Activated CD4-positive, alpha-beta T cell treated with anti-CD3 and anti-CD28 coated beads for 36 hours (primary cell): ENCODE measurements at regions of chr4 and their contacts with region 1.

Region 1: GRCh38 chr4:92305148-92305877 is 1.5 kb downstream of the GRID2 start:
- DNase-seq: peak; percentile 16
- ATAC-seq: no peak
- H3K4me3 Mint-ChIP-seq: no peak overlapping the region
- H3K27ac Mint-ChIP-seq: no peak overlapping the region
- H3K4me1 Mint-ChIP-seq: peaks cover 4% of the 10 kb centered on the region
- H3K27me3 Mint-ChIP-seq: peaks cover 35% of the 10 kb centered on the region

Region 2: DNA sequence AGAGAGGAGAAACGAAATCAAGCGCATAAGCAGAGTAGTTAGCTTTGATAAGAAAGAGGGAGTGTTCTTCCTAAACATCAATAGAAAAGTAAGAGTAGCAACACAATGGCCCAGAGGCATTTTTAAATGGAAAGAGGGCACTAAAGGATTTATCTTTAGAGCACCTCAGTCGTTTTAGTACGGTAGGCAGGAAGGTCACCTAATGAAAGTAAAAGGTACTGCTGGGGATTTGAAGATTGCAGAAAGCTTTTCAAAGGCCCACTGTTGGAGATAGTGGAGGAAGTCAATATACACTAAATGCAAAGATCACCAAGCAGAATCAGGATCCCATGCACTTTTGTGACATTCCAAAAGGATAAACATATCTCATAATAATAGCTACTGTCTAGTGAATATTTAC is 669.2 kb before region 1 on chr4:
- CTCF ChIA-PET with region 1: no interaction called
- POLR2A ChIA-PET with region 1: no interaction called
- intact Hi-C with region 1: no loop called
- DNase-seq: no peak
- ATAC-seq: no peak
- H3K4me3 Mint-ChIP-seq: no peak overlapping the region
- H3K27ac Mint-ChIP-seq: no peak overlapping the region
- H3K4me1 Mint-ChIP-seq: no peaks in the 10 kb centered on the region
- H3K27me3 Mint-ChIP-seq: no peaks in the 10 kb centered on the region

Region 3: DNA sequence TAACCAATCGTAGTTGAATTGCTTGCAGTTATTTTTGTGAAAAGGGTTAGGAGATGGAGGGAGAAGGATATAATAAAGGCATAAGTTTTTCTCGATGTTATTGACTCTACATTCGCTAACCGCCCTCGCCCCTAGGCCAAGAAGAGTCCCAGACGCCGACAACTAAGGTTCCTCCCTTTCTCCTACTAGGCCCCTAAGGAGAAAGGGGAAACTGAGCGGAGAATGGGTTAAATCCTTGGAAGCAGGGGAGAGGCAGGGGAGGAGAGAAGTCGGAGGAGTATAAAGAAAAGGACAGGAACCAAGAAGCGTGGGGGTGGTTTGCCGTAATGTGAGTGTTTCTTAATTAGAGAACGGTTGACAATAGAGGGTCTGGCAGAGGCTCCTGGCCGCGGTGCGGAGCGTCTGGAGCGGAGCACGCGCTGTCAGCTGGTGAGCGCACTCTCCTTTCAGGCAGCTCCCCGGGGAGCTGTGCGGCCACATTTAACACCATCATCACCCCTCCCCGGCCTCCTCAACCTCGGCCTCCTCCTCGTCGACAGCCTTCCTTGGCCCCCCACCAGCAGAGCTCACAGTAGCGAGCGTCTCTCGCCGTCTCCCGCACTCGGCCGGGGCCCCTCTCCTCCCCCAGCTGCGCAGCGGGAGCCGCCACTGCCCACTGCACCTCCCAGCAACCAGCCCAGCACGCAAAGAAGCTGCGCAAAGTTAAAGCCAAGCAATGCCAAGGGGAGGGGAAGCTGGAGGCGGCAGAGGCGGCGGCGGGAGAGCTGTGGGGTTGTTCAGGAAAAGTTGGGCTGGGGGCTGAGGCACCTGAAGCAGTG is 1529.1 kb after region 1 on chr4:
- CTCF ChIA-PET with region 1: no interaction called
- POLR2A ChIA-PET with region 1: no interaction called
- intact Hi-C with region 1: loop called in 1 of 2 experiments (anchors 10 kb)
- DNase-seq: no peak
- ATAC-seq: no peak
- H3K4me3 Mint-ChIP-seq: no peak overlapping the region
- H3K27ac Mint-ChIP-seq: no peak overlapping the region
- H3K4me1 Mint-ChIP-seq: peaks cover 6% of the 10 kb centered on the region
- H3K27me3 Mint-ChIP-seq: peaks cover 57% of the 10 kb centered on the region